Activated CD4-positive, alpha-beta T cell treated with anti-CD3 and anti-CD28 coated beads for 36 hours (primary cell): ENCODE measurements at regions of chr1 and their contacts with region 1.

Region 1: GRCh38 chr1:67897270-67897949 is 64.1 kb upstream of the GNG12 start:
- DNase-seq: no peak
- ATAC-seq: no peak
- H3K4me3 Mint-ChIP-seq: no peak overlapping the region
- H3K27ac Mint-ChIP-seq: no peak overlapping the region
- H3K4me1 Mint-ChIP-seq: no peaks in the 10 kb centered on the region
- H3K27me3 Mint-ChIP-seq: peaks cover 25% of the 10 kb centered on the region

Region 2: DNA sequence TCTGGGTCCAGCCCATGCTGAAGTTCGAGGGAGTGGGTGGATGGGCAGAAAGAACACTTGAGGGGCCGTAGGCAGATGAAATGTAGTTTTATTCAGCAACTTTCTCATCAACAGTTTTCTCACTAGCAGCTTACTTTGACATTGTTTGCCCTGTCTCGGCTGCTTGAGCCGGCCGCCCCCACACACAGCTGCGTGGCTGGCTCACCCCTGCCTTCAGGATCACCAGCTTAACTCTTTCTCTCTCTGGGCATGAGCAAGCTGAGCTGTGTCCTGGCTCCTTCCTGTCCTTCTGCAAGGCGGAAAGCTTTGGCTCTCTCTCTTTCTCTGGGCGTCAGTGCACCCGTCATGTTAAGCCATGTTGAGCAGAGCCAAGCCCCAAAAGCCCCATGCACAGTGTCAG is 40.2 kb after region 1 on chr1:
- CTCF ChIA-PET with region 1: no interaction called
- POLR2A ChIA-PET with region 1: no interaction called
- intact Hi-C with region 1: loop called in 1 of 2 experiments (anchors 1 kb)
- DNase-seq: no peak
- ATAC-seq: no peak
- H3K4me3 Mint-ChIP-seq: no peak overlapping the region
- H3K27ac Mint-ChIP-seq: no peak overlapping the region
- H3K4me1 Mint-ChIP-seq: no peaks in the 10 kb centered on the region
- H3K27me3 Mint-ChIP-seq: peaks cover 6% of the 10 kb centered on the region